ENCODE measurements at regions of chr11 and their contacts with region 1.

Region 1: GRCh38 chr11:134449713-134450112 is 37.7 kb upstream of the B3GAT1 start:
- DNase-seq: no peak
- H3K4me3 ChIP-seq: no peak overlapping the region
- H3K27ac ChIP-seq: no peak overlapping the region
- H3K4me1 ChIP-seq: no peaks in the 10 kb centered on the region
- H3K27me3 ChIP-seq: no peaks in the 10 kb centered on the region
- CTCF ChIP-seq: no peak

Region 2: DNA sequence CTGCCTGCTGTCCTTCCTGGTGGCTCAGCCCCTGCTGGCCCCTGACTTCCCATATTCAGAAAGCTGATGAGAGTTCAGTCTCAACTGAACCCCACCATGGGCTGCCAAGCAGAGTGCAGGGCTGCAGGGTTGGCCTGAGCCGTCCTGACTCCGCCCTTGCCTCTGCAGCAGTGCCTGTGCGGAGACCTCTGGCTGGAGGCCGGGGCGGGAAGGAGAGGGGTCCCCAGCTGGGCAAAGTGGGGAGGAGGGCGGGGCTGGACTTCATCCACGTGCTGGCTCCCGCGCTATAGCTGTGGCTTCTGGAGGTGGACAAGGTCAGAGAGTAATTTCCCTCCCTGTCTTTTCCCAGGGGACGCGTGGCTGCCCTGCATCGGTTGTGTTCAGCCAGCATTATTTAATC is 159.9 kb before region 1 on chr11:
- CTCF ChIA-PET with region 1: no interaction called
- dilution Hi-C with region 1: no loop called
- in situ Hi-C with region 1: no loop called
- intact Hi-C with region 1: no loop called
- DNase-seq: no peak
- H3K4me3 ChIP-seq: no peak overlapping the region
- H3K27ac ChIP-seq: no peak overlapping the region
- H3K4me1 ChIP-seq: no peaks in the 10 kb centered on the region
- H3K27me3 ChIP-seq: no peaks in the 10 kb centered on the region
- CTCF ChIP-seq: no peak

Region 3: DNA sequence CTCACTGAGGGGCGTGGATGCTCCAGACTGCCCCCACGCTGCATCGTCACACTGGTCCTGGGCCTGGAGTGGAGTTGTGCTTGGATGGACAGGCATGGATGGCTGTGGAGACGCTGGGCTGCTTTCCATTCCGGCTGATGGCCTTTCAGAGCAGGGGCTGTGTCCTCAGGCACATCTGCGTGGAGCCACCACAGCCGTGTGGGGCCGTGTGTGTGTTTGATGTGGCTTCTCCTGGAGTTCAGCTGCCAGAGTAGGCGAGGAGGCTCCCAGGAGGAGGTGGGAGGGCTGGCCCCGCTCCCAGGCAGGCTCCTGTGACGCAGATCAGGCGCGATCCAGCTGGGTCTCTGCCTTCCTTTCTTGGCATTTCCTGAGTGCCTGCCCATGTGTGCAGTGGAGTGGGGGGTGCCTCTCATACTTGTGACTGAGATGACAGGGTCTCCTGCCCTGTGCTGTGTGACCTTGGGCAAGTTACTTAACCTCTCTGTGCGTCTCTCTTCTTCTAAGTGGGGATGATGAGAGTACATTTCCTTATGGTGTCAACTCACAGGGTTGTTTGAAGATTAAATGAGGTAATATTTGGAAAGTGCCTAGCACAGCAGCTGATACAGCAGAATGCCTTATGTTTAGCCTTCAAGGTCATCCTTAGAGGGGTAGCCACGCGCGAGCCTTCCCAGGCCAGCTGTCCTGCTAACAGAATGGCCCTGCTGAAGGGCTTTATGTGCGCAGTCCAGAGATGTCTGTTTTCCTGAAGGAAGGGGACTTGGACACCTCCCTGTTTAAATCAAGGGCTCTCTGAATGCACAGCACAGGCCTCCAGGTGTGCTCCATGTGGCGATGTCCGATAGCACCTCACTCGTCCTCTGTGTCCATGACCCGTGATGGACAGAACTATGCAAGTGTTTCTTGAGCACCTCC is 84.4 kb before region 1 on chr11:
- CTCF ChIA-PET with region 1: no interaction called
- dilution Hi-C with region 1: loop called (anchors 5 kb)
- in situ Hi-C with region 1: no loop called
- intact Hi-C with region 1: no loop called
- DNase-seq: no peak
- H3K4me3 ChIP-seq: no peak overlapping the region
- H3K27ac ChIP-seq: no peak overlapping the region
- H3K4me1 ChIP-seq: no peaks in the 10 kb centered on the region
- H3K27me3 ChIP-seq: no peaks in the 10 kb centered on the region
- CTCF ChIP-seq: no peak

Region 4: GRCh38 chr11:134401825-134402809 is 47.6 kb before region 1 on chr11:
- CTCF ChIA-PET with region 1: no interaction called
- dilution Hi-C with region 1: loop called (anchors 5 kb)
- in situ Hi-C with region 1: no loop called
- intact Hi-C with region 1: no loop called
- DNase-seq: no peak
- H3K4me3 ChIP-seq: no peak overlapping the region
- H3K27ac ChIP-seq: no peak overlapping the region
- H3K4me1 ChIP-seq: no peaks in the 10 kb centered on the region
- H3K27me3 ChIP-seq: no peaks in the 10 kb centered on the region
- CTCF ChIP-seq: no peak

Region 5: GRCh38 chr11:134476435-134477021 is 26.8 kb after region 1 on chr11:
- CTCF ChIA-PET with region 1: no interaction called
- dilution Hi-C with region 1: no loop called
- in situ Hi-C with region 1: no loop called
- intact Hi-C with region 1: no loop called
- DNase-seq: no peak
- H3K4me3 ChIP-seq: no peak overlapping the region
- H3K27ac ChIP-seq: no peak overlapping the region
- H3K4me1 ChIP-seq: no peaks in the 10 kb centered on the region
- H3K27me3 ChIP-seq: no peaks in the 10 kb centered on the region
- CTCF ChIP-seq: no peak